ENCODE measurements at regions of chr5 and their contacts with region 1.

Region 1: GRCh38 chr5:160887777-160888176 is 35.8 kb upstream of the ATP10B start:
- DNase-seq: peak; percentile 84 to 85
- H3K4me3 ChIP-seq: no peak overlapping the region
- H3K4me3 Mint-ChIP-seq: peak overlapping the region; percentile 40
- H3K27ac Mint-ChIP-seq: peak overlapping the region; percentile 98
- H3K4me1 ChIP-seq: peaks cover 72% of the 10 kb centered on the region
- H3K4me1 Mint-ChIP-seq: peaks cover 56% of the 10 kb centered on the region
- H3K27me3 ChIP-seq: no peaks in the 10 kb centered on the region
- H3K27me3 Mint-ChIP-seq: no peaks in the 10 kb centered on the region
- CTCF ChIP-seq: no peak

Region 2: GRCh38 chr5:160699301-160699700 is 188.5 kb before region 1 on chr5:
- CTCF ChIA-PET with region 1: no interaction called
- POLR2A ChIA-PET with region 1: no interaction called
- intact Hi-C with region 1: loop called (anchors 10 kb)
- DNase-seq: no peak
- H3K4me3 ChIP-seq: no peak overlapping the region
- H3K4me3 Mint-ChIP-seq: no peak overlapping the region
- H3K27ac Mint-ChIP-seq: peak overlapping the region; percentile 22
- H3K4me1 ChIP-seq: peaks cover 26% of the 10 kb centered on the region
- H3K4me1 Mint-ChIP-seq: peaks cover 14% of the 10 kb centered on the region
- H3K27me3 ChIP-seq: no peaks in the 10 kb centered on the region
- H3K27me3 Mint-ChIP-seq: no peaks in the 10 kb centered on the region
- CTCF ChIP-seq: no peak

Region 3: GRCh38 chr5:160747987-160748386 is 139.8 kb before region 1 on chr5:
- CTCF ChIA-PET with region 1: no interaction called
- POLR2A ChIA-PET with region 1: no interaction called
- intact Hi-C with region 1: no loop called
- DNase-seq: no peak
- H3K4me3 ChIP-seq: no peak overlapping the region
- H3K4me3 Mint-ChIP-seq: no peak overlapping the region
- H3K27ac Mint-ChIP-seq: no peak overlapping the region
- H3K4me1 ChIP-seq: no peaks in the 10 kb centered on the region
- H3K4me1 Mint-ChIP-seq: no peaks in the 10 kb centered on the region
- H3K27me3 ChIP-seq: no peaks in the 10 kb centered on the region
- H3K27me3 Mint-ChIP-seq: peaks cover 4% of the 10 kb centered on the region
- CTCF ChIP-seq: no peak

Region 4: DNA sequence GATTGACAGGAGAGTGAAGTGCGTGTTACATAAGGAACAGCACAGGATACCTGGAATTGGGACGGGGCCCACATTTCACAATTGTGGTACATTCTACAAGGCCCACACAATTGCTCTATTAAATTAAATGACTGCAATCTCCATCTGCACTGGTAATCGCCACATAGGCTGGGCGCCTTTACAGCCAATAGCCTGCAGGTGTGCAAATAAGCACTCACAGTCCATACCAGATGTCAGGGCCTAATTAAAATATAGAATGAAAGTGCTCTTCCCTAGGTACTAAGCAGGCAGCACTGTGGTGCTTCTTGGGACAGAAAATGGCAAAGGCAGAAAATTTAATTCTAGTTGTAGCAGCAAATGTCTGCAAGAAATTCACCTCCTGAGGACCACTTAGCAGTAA is 118.5 kb before region 1 on chr5:
- CTCF ChIA-PET with region 1: no interaction called
- POLR2A ChIA-PET with region 1: no interaction called
- intact Hi-C with region 1: no loop called
- DNase-seq: no peak
- H3K4me3 ChIP-seq: no peak overlapping the region
- H3K4me3 Mint-ChIP-seq: no peak overlapping the region
- H3K27ac Mint-ChIP-seq: no peak overlapping the region
- H3K4me1 ChIP-seq: no peaks in the 10 kb centered on the region
- H3K4me1 Mint-ChIP-seq: no peaks in the 10 kb centered on the region
- H3K27me3 ChIP-seq: no peaks in the 10 kb centered on the region
- H3K27me3 Mint-ChIP-seq: peaks cover 2% of the 10 kb centered on the region
- CTCF ChIP-seq: no peak

Region 5: GRCh38 chr5:160802592-160802991 is 85.2 kb before region 1 on chr5:
- CTCF ChIA-PET with region 1: no interaction called
- POLR2A ChIA-PET with region 1: no interaction called
- intact Hi-C with region 1: loop called (anchors 5 kb)
- DNase-seq: peak; percentile 38 to 44
- H3K4me3 ChIP-seq: no peak overlapping the region
- H3K4me3 Mint-ChIP-seq: no peak overlapping the region
- H3K27ac Mint-ChIP-seq: no peak overlapping the region
- H3K4me1 ChIP-seq: 0 out of 2 replicates have a peak, but pooled peaks cover 10% of the 10 kb centered on the region
- H3K4me1 Mint-ChIP-seq: peaks cover 10% of the 10 kb centered on the region
- H3K27me3 ChIP-seq: no peaks in the 10 kb centered on the region
- H3K27me3 Mint-ChIP-seq: no peaks in the 10 kb centered on the region
- CTCF ChIP-seq: peak; percentile 22 to 41

Region 6: DNA sequence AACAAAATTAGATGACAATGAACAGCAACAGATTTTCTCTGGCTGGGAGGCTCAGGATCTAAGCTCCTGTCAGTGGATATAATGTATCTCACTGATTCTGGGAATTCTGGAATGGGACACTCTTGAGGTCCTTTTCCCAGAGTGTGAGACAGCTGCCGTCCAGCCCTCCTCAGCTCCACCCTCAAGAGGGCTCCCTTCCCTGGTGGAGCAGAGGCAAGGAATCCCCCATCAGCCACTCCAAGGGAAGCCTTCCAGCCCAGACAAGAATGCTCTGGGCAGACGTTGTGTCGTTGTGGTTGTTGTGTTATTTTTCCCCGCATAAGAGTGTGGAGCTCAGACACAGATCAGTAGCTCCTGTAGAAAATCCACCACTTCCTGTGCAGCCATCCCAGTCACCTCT is 12.0 kb after region 1 on chr5:
- CTCF ChIA-PET with region 1: interaction called, 3 read pairs
- POLR2A ChIA-PET with region 1: no interaction called
- intact Hi-C with region 1: loop called (anchors 1 kb)
- DNase-seq: no peak
- H3K4me3 ChIP-seq: no peak overlapping the region
- H3K4me3 Mint-ChIP-seq: no peak overlapping the region
- H3K27ac Mint-ChIP-seq: peak overlapping the region; percentile 68
- H3K4me1 ChIP-seq: peaks cover 53% of the 10 kb centered on the region
- H3K4me1 Mint-ChIP-seq: peaks cover 49% of the 10 kb centered on the region
- H3K27me3 ChIP-seq: no peaks in the 10 kb centered on the region
- H3K27me3 Mint-ChIP-seq: no peaks in the 10 kb centered on the region
- CTCF ChIP-seq: no peak

Region 7: GRCh38 chr5:160905285-160905684 is 17.5 kb after region 1 on chr5:
- CTCF ChIA-PET with region 1: interaction called, 3 read pairs
- POLR2A ChIA-PET with region 1: no interaction called
- intact Hi-C with region 1: loop called (anchors 2 kb)
- DNase-seq: no peak
- H3K4me3 ChIP-seq: no peak overlapping the region
- H3K4me3 Mint-ChIP-seq: no peak overlapping the region
- H3K27ac Mint-ChIP-seq: no peak overlapping the region
- H3K4me1 ChIP-seq: peaks cover 60% of the 10 kb centered on the region
- H3K4me1 Mint-ChIP-seq: peaks cover 52% of the 10 kb centered on the region
- H3K27me3 ChIP-seq: no peaks in the 10 kb centered on the region
- H3K27me3 Mint-ChIP-seq: no peaks in the 10 kb centered on the region
- CTCF ChIP-seq: no peak

Region 8: GRCh38 chr5:160923936-160924710 is 36.3 kb after region 1 on chr5:
- CTCF ChIA-PET with region 1: no interaction called
- POLR2A ChIA-PET with region 1: no interaction called
- intact Hi-C with region 1: loop called (anchors 1 kb)
- DNase-seq: peak; percentile 95 to 97
- H3K4me3 ChIP-seq: no peak overlapping the region
- H3K4me3 Mint-ChIP-seq: peak overlapping the region; percentile 44
- H3K27ac Mint-ChIP-seq: peak overlapping the region; percentile 76
- H3K4me1 ChIP-seq: peaks cover 64% of the 10 kb centered on the region
- H3K4me1 Mint-ChIP-seq: peaks cover 46% of the 10 kb centered on the region
- H3K27me3 ChIP-seq: no peaks in the 10 kb centered on the region
- H3K27me3 Mint-ChIP-seq: no peaks in the 10 kb centered on the region
- CTCF ChIP-seq: no peak

Region 9: DNA sequence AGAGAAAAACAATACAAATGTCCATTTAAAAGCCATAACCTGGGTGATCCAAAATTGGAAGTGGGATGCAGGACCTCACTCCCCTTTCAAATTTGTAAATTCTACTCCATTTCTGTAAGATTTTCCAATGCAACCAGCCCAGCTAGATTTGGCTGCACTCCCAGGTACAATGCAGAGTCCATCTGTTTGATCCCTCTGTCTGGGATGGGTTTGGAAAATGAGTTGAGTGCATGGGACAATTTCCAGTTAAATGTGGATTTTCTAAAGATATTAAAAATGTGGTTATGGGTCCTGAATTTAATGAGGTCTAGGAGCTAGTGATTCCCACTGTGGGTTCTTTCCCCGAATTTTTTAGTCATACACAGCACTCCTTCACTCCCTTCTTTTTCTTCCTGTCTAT is 68.3 kb after region 1 on chr5:
- CTCF ChIA-PET with region 1: no interaction called
- POLR2A ChIA-PET with region 1: no interaction called
- intact Hi-C with region 1: no loop called
- DNase-seq: no peak
- H3K4me3 ChIP-seq: no peak overlapping the region
- H3K4me3 Mint-ChIP-seq: no peak overlapping the region
- H3K27ac Mint-ChIP-seq: no peak overlapping the region
- H3K4me1 ChIP-seq: peaks cover 10% of the 10 kb centered on the region
- H3K4me1 Mint-ChIP-seq: peaks cover 6% of the 10 kb centered on the region
- H3K27me3 ChIP-seq: no peaks in the 10 kb centered on the region
- H3K27me3 Mint-ChIP-seq: no peaks in the 10 kb centered on the region
- CTCF ChIP-seq: no peak